Activated B cell treated with CpG ODN at 0.5 μM for 24 hours (primary cell): ENCODE measurements at regions of chr16 and their contacts with region 1.

Region 1: DNA sequence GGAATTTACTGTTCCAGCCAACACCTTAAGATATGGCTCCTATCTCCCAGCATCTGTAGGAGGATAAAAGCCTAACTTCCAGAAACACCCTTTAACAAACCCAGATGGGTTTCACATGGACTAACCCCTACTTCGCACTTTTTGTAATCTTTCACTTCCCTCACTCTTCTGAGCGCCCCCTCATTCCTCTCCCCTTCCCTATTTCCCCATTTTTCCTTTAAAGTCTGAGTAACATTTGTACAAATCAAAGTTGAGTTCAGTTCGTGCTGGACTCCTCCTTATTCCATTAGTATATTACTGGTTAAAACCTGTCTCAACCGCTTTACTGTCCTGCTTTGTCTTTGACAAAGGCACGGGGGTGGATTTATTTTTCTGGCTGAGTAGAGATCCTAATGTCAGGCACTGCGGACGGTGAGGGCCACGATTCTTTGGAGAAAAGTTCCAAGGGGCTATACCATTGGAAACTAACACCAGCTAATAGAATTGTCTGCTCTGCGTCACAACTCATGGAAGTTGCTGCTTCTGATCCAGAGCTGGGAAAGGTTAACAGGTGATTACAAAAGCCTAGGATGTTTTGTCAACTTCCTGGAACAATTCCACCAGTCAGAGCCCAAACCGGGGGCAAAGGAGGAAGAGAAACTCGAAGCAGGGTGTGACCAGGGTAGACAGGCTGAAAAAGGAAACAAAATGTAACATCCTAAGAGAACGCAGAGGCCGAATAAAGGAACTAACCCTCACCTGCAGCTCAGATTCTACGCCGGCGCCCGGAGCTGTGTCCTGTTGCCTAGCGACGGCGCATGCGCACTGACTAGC is 12.5 kb downstream of the TAT start:
- DNase-seq: no peak
- ATAC-seq: peak; percentile 84
- H3K4me3 Mint-ChIP-seq: peak overlapping the region; percentile 87
- H3K27ac Mint-ChIP-seq: peak overlapping the region; percentile 96
- H3K4me1 Mint-ChIP-seq: peaks cover 46% of the 10 kb centered on the region
- H3K27me3 Mint-ChIP-seq: no peaks in the 10 kb centered on the region
- CTCF ChIP-seq: no peak

Region 2: DNA sequence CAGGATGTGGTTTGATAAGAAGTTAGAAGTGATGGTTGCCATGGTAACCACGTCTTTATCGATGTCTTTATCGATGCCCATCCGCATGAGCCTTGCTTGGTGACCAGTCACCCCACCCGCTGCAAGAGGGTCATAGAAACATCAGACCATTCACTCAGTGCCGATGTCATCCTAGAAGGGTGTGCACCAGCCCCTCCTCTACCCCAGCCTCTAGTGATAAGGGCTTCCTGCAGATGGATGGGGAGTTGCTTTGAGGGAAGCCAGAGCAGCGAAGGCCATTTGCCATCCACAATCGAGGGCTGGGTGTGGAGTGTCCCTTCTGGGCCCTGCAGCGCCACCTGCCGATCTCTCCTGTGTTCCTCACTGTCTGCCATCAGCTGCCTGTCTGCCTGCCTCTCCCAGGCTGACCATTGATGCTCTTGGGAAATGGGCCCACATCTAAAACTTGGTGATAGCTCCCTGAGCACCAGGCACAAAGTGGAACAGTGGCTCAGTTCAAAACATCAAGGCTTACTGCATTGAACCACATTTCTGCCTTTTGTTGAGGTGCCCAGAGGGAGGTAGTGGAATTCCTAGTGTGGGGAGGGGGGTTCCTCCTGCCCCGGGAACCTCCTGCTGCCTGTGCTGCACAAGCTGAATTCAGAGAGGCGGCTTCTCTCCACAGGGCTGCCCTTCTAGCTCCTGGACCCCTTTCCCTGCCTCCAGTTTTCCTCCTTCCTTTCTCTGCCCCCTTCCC is 197.0 kb before region 1 on chr16:
- CTCF ChIA-PET with region 1: no interaction called
- POLR2A ChIA-PET with region 1: no interaction called
- intact Hi-C with region 1: no loop called
- DNase-seq: no peak
- ATAC-seq: no peak
- H3K4me3 Mint-ChIP-seq: no peak overlapping the region
- H3K27ac Mint-ChIP-seq: no peak overlapping the region
- H3K4me1 Mint-ChIP-seq: no peaks in the 10 kb centered on the region
- H3K27me3 Mint-ChIP-seq: peaks cover 11% of the 10 kb centered on the region
- CTCF ChIP-seq: no peak

Region 3: DNA sequence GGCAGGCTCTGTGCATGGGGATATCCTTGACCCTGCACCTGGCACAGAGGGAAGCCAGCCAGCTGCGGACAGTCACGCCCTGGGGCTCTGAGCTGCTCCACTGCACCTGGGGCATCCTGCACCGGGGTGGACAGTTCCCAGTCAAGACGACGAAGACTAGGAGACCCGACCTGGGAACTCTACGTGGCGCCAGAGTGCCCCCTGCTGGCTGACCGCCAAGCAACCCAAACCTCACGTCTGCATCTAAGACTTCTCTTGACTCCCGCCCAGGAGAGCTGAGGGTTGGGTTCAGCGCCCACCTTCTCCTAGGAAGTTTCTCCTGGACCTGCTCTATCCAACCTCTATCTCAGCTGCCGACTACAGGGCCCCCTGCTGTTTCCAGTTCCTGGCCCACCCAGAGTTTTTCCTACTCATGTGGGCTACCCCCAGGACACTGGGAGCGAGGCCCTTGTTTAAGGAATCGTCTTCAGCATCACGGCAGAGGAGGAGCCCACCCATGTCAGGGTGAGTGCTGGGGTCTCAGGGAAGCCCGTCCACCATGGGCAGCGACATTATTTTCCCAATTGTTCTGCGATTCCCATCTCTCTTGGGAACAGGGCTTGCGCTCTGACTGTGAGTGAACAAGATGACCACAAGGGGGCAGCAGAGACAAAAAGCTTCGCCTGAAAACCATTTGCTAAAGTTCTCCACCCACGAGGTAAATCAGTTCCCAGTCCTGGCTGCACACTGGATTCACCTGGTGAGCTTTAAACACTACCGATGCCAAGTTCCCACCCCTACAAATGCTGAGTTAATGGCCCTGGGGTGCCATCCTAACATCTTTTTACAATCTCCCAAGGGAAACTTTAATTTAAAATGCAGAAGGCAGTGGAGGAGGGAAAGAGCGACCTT is 151.8 kb before region 1 on chr16:
- CTCF ChIA-PET with region 1: interaction called, 10 read pairs
- POLR2A ChIA-PET with region 1: no interaction called
- intact Hi-C with region 1: loop called (anchors 1 kb)
- DNase-seq: peak; percentile 36
- ATAC-seq: peak; percentile 57
- H3K4me3 Mint-ChIP-seq: no peak overlapping the region
- H3K27ac Mint-ChIP-seq: no peak overlapping the region
- H3K4me1 Mint-ChIP-seq: peaks cover 9% of the 10 kb centered on the region
- H3K27me3 Mint-ChIP-seq: peaks cover 32% of the 10 kb centered on the region
- CTCF ChIP-seq: peak; percentile 38

Region 4: GRCh38 chr16:71537643-71538042 is 26.7 kb before region 1 on chr16:
- CTCF ChIA-PET with region 1: interaction called, 4 read pairs
- POLR2A ChIA-PET with region 1: no interaction called
- intact Hi-C with region 1: loop called (anchors 2 kb)
- DNase-seq: no peak
- ATAC-seq: peak; percentile 65
- H3K4me3 Mint-ChIP-seq: no peak overlapping the region
- H3K27ac Mint-ChIP-seq: no peak overlapping the region
- H3K4me1 Mint-ChIP-seq: peaks cover 16% of the 10 kb centered on the region
- H3K27me3 Mint-ChIP-seq: peaks cover 8% of the 10 kb centered on the region
- CTCF ChIP-seq: no peak

Region 5: GRCh38 chr16:71687861-71688260 is 123.5 kb after region 1 on chr16:
- CTCF ChIA-PET with region 1: no interaction called
- POLR2A ChIA-PET with region 1: no interaction called
- intact Hi-C with region 1: no loop called
- DNase-seq: no peak
- ATAC-seq: no peak
- H3K4me3 Mint-ChIP-seq: no peak overlapping the region
- H3K27ac Mint-ChIP-seq: no peak overlapping the region
- H3K4me1 Mint-ChIP-seq: peaks cover 5% of the 10 kb centered on the region
- H3K27me3 Mint-ChIP-seq: no peaks in the 10 kb centered on the region
- CTCF ChIP-seq: no peak

Region 6: DNA sequence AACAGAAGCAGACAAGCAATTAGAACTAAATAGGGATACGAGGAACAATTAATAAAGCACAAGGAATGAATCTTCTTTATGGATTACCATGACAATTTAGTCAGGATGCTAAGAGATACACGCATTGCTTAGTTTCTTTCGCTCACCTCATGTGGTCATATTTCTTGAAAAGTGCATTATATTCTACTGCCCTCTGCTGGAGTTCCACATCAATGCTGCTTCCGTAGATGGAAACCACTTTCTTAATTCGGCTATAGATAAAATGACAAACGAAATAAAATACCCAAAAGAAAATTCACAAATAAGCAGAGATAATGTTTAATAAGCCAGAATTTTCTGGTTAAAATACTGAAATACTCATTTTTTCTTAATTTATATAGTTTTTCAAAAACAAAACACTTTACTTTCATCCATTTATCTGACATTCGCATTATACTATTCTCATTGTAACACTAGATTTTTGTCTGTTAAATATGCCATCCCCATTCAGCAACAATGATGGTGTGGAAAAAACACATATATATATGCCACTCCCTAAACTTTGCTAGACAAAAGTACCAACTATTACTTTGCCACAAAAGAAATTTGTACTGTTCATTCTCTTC is 182.2 kb after region 1 on chr16:
- CTCF ChIA-PET with region 1: interaction called, 4 read pairs
- POLR2A ChIA-PET with region 1: interaction called, 3 read pairs
- intact Hi-C with region 1: loop called (anchors 1 kb)
- DNase-seq: no peak
- ATAC-seq: peak; percentile 60
- H3K4me3 Mint-ChIP-seq: no peak overlapping the region
- H3K27ac Mint-ChIP-seq: no peak overlapping the region
- H3K4me1 Mint-ChIP-seq: no peaks in the 10 kb centered on the region
- H3K27me3 Mint-ChIP-seq: no peaks in the 10 kb centered on the region
- CTCF ChIP-seq: peak; percentile 88

Region 7: GRCh38 chr16:71894921-71895678 is 330.7 kb after region 1 on chr16 and contains the start of gene IST1:
- CTCF ChIA-PET with region 1: no interaction called
- POLR2A ChIA-PET with region 1: no interaction called
- intact Hi-C with region 1: loop called (anchors 1 kb)
- DNase-seq: peak; percentile 91
- ATAC-seq: peak; percentile 90
- H3K4me3 Mint-ChIP-seq: peak within 1 kb of the TSS; percentile 96
- H3K27ac Mint-ChIP-seq: peak within 1 kb of the TSS; percentile 94
- H3K4me1 Mint-ChIP-seq: peaks cover 30% of the 10 kb centered on the region
- H3K27me3 Mint-ChIP-seq: no peaks in the 10 kb centered on the region
- CTCF ChIP-seq: no peak
- total RNA-seq, gene IST1: 199 and 206 TPM in 2 replicates

Region 8: DNA sequence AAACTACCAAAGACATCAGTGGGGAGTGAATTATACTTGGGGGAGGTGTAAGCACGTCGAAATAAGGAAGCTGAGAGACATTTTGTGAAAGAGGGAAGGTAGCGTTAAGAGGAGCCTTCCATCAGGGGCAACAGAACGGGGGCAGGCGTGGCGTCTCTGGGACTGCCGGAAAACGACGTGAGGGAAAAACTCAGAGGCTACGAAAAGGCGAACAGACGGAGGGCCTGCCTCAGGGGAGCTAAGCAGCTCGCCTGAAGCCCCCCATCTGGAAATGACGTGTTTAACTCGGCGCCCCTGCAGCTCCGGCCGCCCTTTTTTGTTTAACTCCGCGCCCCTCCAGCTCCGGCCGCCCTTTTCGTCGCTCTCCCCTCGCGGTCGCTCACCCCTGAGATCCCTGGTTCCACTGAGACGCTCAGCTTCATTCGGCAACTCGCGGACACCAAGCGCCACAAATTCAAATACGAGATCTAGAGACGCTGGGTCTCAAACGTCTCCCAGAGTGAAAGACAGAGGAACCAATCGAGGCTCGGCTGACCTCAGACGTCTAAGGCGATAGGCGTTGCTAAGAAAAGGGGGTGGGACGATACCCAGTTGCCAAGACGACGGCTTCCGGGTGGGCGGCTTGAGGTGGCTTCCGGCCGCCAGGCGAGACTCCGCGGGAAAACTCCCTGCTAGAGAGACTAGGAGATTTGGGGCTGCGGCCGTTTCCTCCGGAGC is 1100.3 kb after region 1 on chr16:
- CTCF ChIA-PET with region 1: no interaction called
- POLR2A ChIA-PET with region 1: no interaction called
- intact Hi-C with region 1: loop called (anchors 10 kb)
- DNase-seq: peak; percentile 85
- ATAC-seq: peak; percentile 99
- H3K4me3 Mint-ChIP-seq: peak overlapping the region; percentile 98
- H3K27ac Mint-ChIP-seq: peak overlapping the region; percentile 95
- H3K4me1 Mint-ChIP-seq: peaks cover 20% of the 10 kb centered on the region
- H3K27me3 Mint-ChIP-seq: no peaks in the 10 kb centered on the region
- CTCF ChIP-seq: no peak